Aorta (tissue), 5 donors: ENCODE measurements at regions of chr1 and their contacts with region 1.

Region 1: DNA sequence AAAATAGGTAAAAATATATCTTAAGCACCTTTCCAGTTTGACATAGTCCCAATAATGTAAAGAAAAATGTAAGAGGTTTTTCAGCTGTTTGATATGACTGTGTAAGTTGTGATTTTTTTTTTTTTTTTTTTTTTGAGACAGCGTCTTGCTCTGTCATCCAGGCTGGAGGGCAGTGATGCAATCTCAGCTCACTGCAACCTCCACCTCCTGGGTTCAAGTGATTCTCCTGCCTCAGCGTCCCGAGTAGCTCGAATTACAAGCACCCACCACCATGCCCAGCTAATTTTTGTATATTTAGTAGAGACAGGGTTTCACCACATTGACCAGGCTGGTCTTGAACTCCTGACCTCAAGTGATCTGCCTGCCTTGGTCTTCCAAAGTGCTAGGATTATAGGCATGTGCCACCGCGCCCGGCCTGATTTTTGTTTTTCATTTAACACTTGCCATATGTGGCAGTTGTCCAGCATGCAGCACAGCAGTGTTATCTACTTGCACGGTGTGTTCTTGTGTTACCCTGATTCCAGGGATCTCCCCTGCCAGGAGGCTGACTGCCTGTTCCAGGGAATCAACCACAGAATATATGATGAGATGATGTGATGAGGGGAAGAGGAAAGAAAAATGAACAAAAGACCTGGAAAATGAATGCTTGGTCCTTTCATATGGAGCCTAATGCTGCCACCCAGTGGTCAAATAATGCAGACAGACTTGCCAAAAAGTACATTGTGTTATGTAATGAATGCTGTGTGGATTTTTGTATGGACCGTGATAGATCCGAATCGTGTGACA is 79.0 kb downstream of the RAVER2 start:
- DNase-seq: peak in 1 of 2 donors; percentile 75
- ATAC-seq: peak; percentile 86
- H3K4me3 ChIP-seq: no peak overlapping the region
- H3K27ac ChIP-seq: no peak overlapping the region
- H3K4me1 ChIP-seq: no peaks in the 10 kb centered on the region
- H3K27me3 ChIP-seq: no peaks in the 10 kb centered on the region

Region 2: DNA sequence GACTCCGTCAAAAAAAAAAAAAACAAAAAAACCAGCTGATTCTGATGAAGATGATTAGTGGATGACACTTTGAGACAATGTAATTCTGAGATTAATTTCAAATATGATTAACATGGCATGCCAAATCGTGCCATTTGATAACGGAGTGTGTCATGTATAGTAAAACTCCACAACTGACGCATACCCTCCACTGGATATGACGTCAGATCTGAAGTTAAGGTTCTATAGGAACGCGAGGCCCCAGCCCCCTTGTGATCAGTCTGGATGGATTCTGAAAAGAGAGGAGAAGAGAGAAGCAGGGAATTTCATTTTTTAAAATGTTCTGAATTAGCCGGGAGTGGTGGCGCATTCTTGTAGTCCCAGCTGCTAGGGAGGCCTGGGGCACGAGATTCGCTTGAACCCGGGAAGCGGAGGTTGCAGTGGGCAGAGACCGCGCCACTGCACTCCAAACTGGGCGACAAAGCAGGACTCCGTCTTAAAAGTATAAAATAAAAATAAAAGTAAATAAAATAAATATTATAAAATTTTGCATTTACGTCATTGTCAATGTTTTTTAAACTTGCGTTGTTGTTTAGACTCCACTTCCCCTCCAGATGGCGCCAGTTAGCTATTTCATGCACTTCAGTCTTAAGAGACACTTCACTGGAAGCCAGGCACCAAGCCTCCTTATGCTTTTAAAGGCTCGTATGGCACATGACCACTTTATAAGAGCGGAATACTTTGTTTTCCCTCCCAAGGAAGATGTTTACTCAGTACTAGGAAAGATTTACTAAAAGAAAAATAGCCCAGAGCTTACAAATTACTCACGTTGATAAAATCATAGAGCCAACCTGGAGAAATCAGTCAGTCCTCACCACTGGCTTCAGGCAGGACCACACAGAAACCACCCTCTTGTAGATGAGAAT is 555.0 kb before region 1 on chr1:
- intact Hi-C with region 1: loop called (anchors 5 kb)
- DNase-seq: peak; percentile 72 to 78
- ATAC-seq: peak; percentile 85
- H3K4me3 ChIP-seq: no peak overlapping the region
- H3K27ac ChIP-seq: no peak overlapping the region
- H3K4me1 ChIP-seq: no peaks in the 10 kb centered on the region
- H3K27me3 ChIP-seq: no peaks in the 10 kb centered on the region

Region 3: GRCh38 chr1:64686828-64687724 is 136.8 kb before region 1 on chr1:
- intact Hi-C with region 1: loop called (anchors 2 kb)
- DNase-seq: no peak
- ATAC-seq: peak; percentile 74
- H3K4me3 ChIP-seq: no peak overlapping the region
- H3K27ac ChIP-seq: peak overlapping the region; percentile 2 to 65
- H3K4me1 ChIP-seq: no peaks in the 10 kb centered on the region
- H3K27me3 ChIP-seq: no peaks in the 10 kb centered on the region

Region 4: DNA sequence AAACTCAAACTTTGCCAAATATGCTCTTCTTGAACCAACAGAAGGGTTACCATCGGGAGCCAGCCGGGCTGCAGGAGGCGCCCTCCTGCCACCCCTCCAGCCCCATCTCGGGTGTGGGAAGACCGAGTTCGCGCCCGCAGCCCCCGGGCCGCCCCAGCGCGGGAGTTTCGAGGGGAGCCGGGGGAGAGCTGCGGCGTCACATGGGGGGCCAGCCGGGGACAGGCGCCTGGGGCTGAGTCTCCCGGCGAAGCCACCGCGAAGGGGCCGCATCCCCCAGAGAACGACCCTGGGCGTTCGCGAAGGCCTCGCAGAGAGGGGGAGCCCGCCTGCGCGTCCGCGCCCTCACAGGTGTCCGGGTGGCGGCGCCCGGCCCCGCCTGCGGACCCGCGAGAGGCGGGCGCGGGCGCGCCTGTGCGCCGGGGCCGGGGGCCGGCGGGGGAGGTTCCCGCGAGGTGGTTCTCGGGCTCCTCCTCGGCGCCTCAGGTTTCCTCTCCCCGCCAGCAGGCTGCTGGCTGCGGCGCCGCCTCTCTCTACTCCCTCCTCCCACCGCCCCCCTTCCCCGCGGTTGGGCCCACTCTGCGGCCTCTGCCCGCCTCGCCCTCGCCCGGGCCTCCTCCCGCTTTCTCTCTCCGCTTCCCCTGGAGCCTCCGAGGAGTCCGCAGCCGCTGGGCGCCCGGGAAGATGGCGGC is 79.2 kb before region 1 on chr1 and contains the start of gene RAVER2:
- intact Hi-C with region 1: loop called (anchors 5 to 10 kb)
- DNase-seq: peak; percentile 84 to 90
- ATAC-seq: peak; percentile 84
- H3K4me3 ChIP-seq: peak within 1 kb of the TSS; percentile 87 to 89
- H3K27ac ChIP-seq: peak within 1 kb of the TSS; percentile 57 to 75
- H3K4me1 ChIP-seq: peaks cover 0 to 9% of the 10 kb centered on the region in 2 donors
- H3K27me3 ChIP-seq: no peaks in the 10 kb centered on the region
- total RNA-seq, gene RAVER2: 18.2 to 22.5 TPM